ENCODE measurements at regions of chr20 and their contacts with region 1.

Region 1: DNA sequence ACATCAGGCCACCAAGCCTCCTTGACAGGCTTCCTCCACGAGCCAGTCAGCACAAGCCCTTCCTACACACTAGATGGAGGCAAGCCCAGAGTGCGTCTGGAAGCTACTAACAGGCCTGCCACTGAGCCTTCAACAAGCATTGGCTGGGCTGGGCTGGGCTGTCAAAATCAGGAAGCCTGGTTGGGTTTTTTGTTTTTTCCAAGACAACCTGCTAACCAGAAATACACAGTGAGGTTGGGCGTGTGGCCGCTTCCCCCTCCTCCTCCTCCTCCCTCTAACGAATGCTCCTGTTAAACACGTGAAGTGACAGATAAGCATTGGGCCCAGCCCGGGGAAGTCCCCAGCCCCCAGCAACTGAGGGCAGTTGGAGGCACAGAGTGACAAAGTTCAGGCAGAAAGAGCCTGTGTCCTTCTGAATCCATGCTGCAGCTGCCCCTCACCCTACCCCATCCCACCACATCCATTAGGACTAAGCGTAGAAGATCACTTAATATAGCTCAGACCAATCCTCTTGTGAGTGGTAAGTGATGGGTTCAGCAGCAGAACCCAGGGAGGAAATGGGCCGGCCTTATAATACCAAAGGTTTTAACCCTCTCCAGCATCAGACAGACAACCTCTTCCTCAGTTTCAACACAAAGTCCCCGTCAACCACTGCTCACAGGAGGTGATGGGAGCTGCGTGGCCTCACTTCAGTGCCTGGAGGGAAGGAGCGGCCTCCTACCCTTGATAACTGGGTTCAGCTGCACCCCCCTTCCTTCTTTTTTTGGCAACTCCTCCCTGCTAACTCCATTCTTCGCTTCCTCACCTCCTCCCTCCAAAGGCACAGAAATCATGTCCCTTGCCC is 1.1 kb downstream of the NFATC2 start:
- DNase-seq: peak; percentile 87
- H3K4me3 Mint-ChIP-seq: peak overlapping the region; percentile 96
- H3K27ac Mint-ChIP-seq: peak overlapping the region; percentile 98
- H3K4me1 Mint-ChIP-seq: peaks cover 50% of the 10 kb centered on the region
- H3K27me3 Mint-ChIP-seq: peaks cover 16% of the 10 kb centered on the region

Region 2: GRCh38 chr20:51404298-51405060 is 136.9 kb before region 1 on chr20:
- intact Hi-C with region 1: loop called (anchors 1 kb)
- DNase-seq: peak; percentile 84
- H3K4me3 Mint-ChIP-seq: peak overlapping the region; percentile 28
- H3K27ac Mint-ChIP-seq: peak overlapping the region; percentile 95
- H3K4me1 Mint-ChIP-seq: peaks cover 88% of the 10 kb centered on the region
- H3K27me3 Mint-ChIP-seq: no peaks in the 10 kb centered on the region

Region 3: GRCh38 chr20:51500311-51500710 is 41.1 kb before region 1 on chr20:
- intact Hi-C with region 1: loop called (anchors 1 kb)
- DNase-seq: peak; percentile 46
- H3K4me3 Mint-ChIP-seq: no peak overlapping the region
- H3K27ac Mint-ChIP-seq: peak overlapping the region; percentile 79
- H3K4me1 Mint-ChIP-seq: peaks cover 74% of the 10 kb centered on the region
- H3K27me3 Mint-ChIP-seq: no peaks in the 10 kb centered on the region

Region 4: GRCh38 chr20:51531141-51531710 is 10.2 kb before region 1 on chr20:
- intact Hi-C with region 1: loop called (anchors 1 kb)
- DNase-seq: peak; percentile 44
- H3K4me3 Mint-ChIP-seq: peak overlapping the region; percentile 82
- H3K27ac Mint-ChIP-seq: peak overlapping the region; percentile 99
- H3K4me1 Mint-ChIP-seq: peaks cover 84% of the 10 kb centered on the region
- H3K27me3 Mint-ChIP-seq: no peaks in the 10 kb centered on the region

Region 5: DNA sequence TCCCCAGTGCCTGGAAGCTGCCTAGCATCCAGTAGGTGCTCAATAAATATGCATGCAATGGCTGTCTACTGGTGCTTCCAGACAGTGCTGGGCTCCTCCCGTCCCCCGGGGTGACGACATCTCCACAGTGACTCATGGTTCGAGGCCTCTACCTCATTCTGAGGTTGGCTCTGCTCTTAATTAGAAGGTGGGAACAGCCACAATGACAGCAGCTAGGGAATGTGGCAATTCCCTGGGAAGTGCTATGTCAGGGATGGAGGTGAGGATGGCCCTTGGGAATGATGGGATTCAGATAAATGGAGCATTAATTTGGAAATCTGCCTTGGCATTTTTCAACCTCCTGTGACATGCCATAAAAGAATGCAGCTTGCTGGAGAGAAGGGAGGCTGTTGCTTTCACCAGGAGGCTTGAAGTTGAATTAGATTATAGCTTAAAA is 44.6 kb after region 1 on chr20:
- intact Hi-C with region 1: no loop called
- DNase-seq: no peak
- H3K4me3 Mint-ChIP-seq: no peak overlapping the region
- H3K27ac Mint-ChIP-seq: no peak overlapping the region
- H3K4me1 Mint-ChIP-seq: peaks cover 5% of the 10 kb centered on the region
- H3K27me3 Mint-ChIP-seq: peaks cover 5% of the 10 kb centered on the region

Region 6: GRCh38 chr20:51742685-51743357 is 201.4 kb after region 1 on chr20:
- intact Hi-C with region 1: no loop called
- DNase-seq: no peak
- H3K4me3 Mint-ChIP-seq: no peak overlapping the region
- H3K27ac Mint-ChIP-seq: peak overlapping the region; percentile 78
- H3K4me1 Mint-ChIP-seq: peaks cover 11% of the 10 kb centered on the region
- H3K27me3 Mint-ChIP-seq: peaks cover 3% of the 10 kb centered on the region

Region 7: DNA sequence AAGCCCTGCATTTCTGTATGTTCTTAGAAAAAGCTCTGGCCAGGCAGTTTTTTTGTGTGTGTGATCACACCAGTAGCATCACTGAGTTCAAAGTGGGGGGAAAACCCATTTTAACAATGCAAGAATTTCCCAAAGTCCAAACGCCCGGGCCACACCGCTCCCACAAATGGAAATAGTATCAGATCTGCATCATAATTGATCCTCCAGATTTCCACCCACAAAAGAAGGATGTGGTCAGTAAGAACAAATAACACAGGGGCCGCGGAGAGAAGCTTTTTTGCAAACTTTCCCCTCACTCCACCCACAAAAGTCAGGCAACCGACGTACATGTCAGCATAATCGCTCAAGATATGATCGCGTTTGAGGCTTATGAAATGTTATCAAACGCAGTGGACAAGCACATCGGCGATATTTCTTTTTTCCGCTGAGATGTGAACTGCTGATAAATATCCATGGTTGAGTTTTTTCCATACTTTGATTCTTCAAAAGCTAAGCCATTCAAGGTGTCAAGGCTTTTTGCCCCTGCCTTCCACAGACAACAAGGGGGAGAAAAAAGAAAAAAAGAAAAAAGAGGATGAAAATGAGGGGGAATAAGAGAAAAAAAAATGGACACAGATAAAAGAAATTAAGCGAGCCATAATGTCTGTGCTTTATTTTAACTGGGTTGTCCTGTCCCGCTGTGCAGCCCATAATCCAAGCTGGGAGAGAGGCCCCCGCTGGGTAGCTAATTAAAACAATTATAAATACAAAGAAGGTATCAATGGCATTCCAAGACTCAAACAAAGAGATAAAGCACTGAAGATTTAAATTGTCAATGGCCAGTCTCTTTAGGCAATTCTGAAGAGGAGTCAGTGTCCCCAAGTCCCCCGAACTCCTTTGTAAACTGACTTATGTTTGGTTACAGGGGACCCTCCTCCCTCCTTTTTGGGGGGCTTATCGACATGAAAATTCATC is 506.7 kb after region 1 on chr20:
- intact Hi-C with region 1: loop called (anchors 5 kb)
- DNase-seq: peak; percentile 24
- H3K4me3 Mint-ChIP-seq: peak overlapping the region; percentile 44
- H3K27ac Mint-ChIP-seq: peak overlapping the region; percentile 89
- H3K4me1 Mint-ChIP-seq: peaks cover 35% of the 10 kb centered on the region
- H3K27me3 Mint-ChIP-seq: peaks cover 3% of the 10 kb centered on the region